ENCODE measurements at regions of chr10 and their contacts with region 1.

Region 1: DNA sequence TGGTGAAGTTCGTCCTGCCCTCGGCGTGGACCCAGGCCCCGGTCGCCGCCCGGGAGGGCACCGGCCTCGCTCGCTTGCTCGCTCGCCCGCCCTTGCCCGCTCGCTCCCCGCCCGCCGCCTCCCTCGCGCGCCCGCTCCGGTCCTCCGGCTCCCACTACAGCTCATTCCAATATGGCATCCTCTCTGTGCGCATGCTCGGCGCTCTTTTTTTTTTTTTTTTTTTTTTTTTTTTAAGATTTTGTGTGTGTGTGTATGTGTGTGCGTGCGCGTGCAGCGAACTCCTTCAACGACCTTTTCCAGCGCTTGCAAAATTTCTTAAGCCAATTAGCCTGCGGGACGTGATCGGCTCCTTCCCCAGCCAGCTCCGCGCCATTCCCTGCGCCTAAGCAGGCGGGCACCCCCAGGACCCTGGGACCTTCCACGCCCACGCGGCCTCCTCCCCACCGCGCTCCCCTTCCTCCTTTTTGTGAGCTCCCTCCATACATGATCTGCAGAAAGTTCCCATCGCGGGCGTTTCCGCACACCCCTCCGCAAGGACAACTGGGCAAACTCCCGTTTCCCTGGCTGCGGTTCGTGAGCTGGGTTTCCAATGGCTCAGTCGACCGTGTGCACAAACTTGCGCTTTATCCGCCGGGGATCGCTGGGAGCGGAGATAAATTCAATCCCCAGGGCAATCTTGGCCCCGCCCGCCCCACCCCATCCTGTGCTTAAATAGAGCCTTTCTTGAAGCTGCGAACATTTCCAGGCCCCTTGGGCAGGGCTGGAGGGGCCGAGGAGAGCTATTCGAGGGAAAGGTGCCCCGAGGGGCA is at the start of gene SFMBT2:
- DNase-seq: peak; percentile 52
- ATAC-seq: peak; percentile 59
- H3K4me3 Mint-ChIP-seq: peak within 1 kb of the TSS; percentile 95
- H3K27ac Mint-ChIP-seq: peak within 1 kb of the TSS; percentile 71
- H3K4me1 Mint-ChIP-seq: peaks cover 36% of the 10 kb centered on the region
- H3K27me3 Mint-ChIP-seq: peaks cover 5% of the 10 kb centered on the region
- CTCF ChIP-seq: no peak
- total RNA-seq, gene SFMBT2: 18.7 and 19.2 TPM in 2 replicates

Region 2: GRCh38 chr10:6416892-6417512 is 994.1 kb before region 1 on chr10:
- CTCF ChIA-PET with region 1: no interaction called
- POLR2A ChIA-PET with region 1: no interaction called
- intact Hi-C with region 1: loop called (anchors 2 kb)
- DNase-seq: no peak
- ATAC-seq: peak; percentile 58
- H3K4me3 Mint-ChIP-seq: no peak overlapping the region
- H3K27ac Mint-ChIP-seq: no peak overlapping the region
- H3K4me1 Mint-ChIP-seq: no peaks in the 10 kb centered on the region
- H3K27me3 Mint-ChIP-seq: peaks cover 4% of the 10 kb centered on the region
- CTCF ChIP-seq: peak; percentile 25

Region 3: DNA sequence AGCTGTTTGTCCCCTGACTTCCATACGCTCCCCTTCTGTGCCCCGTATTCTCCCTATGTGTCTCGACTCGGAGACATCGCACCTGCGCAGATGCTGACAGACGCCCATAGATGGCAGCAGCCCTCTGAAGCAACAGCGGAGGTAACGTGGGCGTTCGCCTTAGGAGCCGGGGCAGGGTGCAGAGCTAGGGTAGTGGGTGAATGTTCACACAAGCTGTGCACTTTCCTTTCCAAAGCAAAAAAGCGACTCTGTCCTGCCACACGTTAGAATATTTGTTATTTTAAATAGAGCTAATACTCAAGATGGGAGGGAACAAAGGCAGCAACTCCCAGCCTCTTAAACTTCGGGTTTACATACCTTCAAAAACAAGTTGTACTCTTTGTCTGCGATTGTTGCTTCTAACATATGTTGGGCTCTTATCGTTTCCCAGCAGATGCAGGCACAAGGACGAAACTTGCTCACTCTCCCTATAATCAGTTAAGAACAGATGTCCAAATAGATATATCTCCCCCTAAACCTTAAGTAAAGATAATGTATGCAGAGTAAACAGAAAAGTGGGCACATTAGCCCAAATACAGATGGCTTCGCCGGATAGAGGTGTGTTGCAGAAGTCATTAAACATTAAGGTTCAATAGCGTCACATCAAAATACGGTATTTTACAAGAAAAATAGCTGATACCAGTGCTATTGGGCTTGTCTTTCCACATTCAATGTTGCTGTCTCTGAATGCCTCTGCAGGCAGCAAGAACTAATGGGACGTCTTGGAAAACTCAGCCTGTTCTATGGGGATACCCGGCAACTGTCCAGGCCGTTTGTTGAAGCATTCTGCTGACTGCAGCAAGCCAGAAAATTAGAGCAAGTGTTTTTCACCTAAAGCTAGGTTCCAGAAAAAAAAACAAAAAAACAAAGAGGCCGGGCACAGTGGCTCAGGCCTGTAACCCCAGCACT is 490.7 kb before region 1 on chr10:
- CTCF ChIA-PET with region 1: interaction called, 15 read pairs
- POLR2A ChIA-PET with region 1: interaction called, 3 read pairs
- intact Hi-C with region 1: loop called (anchors 1 kb)
- DNase-seq: peak; percentile 49
- ATAC-seq: peak; percentile 93
- H3K4me3 Mint-ChIP-seq: no peak overlapping the region
- H3K27ac Mint-ChIP-seq: no peak overlapping the region
- H3K4me1 Mint-ChIP-seq: peaks cover 26% of the 10 kb centered on the region
- H3K27me3 Mint-ChIP-seq: no peaks in the 10 kb centered on the region
- CTCF ChIP-seq: peak; percentile 33

Region 4: DNA sequence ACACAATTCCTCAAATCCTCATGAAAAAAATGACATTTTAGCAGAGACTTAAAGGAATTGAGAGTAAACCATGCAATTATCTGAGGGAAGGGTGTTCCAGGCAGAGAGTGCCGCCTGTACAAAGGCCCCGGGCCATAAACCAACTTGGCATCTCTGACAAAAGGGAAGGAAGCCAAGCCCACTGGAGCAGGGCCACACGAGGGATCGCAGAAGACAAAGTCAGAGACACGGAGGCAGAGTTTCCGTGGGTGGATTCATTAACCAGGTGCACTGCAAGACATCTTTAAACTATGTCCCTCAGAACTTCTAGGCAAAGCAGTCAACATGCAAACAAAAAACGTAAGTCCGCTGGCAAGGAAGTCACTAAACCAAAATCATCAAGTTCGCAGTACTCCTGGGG is 92.2 kb before region 1 on chr10:
- CTCF ChIA-PET with region 1: no interaction called
- POLR2A ChIA-PET with region 1: no interaction called
- intact Hi-C with region 1: no loop called
- DNase-seq: no peak
- ATAC-seq: peak; percentile 57
- H3K4me3 Mint-ChIP-seq: peak overlapping the region; percentile 36
- H3K27ac Mint-ChIP-seq: peak overlapping the region; percentile 16
- H3K4me1 Mint-ChIP-seq: peaks cover 53% of the 10 kb centered on the region
- H3K27me3 Mint-ChIP-seq: no peaks in the 10 kb centered on the region
- CTCF ChIP-seq: no peak

Region 5: DNA sequence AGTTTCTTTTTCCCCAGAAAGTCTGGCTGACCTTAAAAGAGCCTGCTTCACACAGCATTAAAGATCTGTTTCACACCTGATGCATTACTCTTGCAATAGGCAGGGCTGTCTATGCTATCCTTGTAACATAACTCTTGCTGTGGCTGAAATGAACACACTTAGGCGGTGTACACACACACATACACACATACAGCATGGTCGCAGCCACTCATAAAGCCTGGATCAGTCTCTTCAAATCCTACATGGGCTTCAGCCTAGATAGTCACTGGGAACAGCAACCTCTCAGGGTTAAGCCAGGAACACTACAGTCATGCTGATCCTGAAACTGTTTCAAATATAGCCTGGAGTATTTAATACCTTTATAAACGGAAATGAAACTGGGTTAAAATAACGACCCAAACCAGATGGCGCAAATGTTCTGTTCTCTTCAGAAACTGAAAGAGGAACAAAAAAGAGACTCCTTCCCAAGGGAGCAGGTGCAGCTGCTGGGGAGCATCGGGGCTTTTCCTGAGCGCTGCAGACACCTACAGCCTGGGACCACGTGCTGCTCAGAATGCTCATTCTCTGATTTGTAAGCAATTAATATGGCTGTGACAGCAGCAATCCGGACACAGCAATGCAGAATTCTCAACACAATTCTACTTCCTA is 60.8 kb after region 1 on chr10:
- CTCF ChIA-PET with region 1: interaction called, 3 read pairs
- POLR2A ChIA-PET with region 1: interaction called, 4 read pairs
- intact Hi-C with region 1: loop called (anchors 1 kb)
- DNase-seq: peak; percentile 59
- ATAC-seq: peak; percentile 89
- H3K4me3 Mint-ChIP-seq: peak overlapping the region; percentile 73
- H3K27ac Mint-ChIP-seq: peak overlapping the region; percentile 90
- H3K4me1 Mint-ChIP-seq: peaks cover 78% of the 10 kb centered on the region
- H3K27me3 Mint-ChIP-seq: no peaks in the 10 kb centered on the region
- CTCF ChIP-seq: no peak

Region 6: GRCh38 chr10:7622969-7623368 is 211.9 kb after region 1 on chr10:
- CTCF ChIA-PET with region 1: interaction called, 3 read pairs
- POLR2A ChIA-PET with region 1: no interaction called
- intact Hi-C with region 1: loop called (anchors 10 kb)
- DNase-seq: no peak
- ATAC-seq: no peak
- H3K4me3 Mint-ChIP-seq: no peak overlapping the region
- H3K27ac Mint-ChIP-seq: no peak overlapping the region
- H3K4me1 Mint-ChIP-seq: peaks cover 5% of the 10 kb centered on the region
- H3K27me3 Mint-ChIP-seq: peaks cover 2% of the 10 kb centered on the region
- CTCF ChIP-seq: no peak

Region 7: GRCh38 chr10:7818295-7819122 is 407.4 kb after region 1 on chr10 and contains the start of gene TAF3:
- CTCF ChIA-PET with region 1: no interaction called
- POLR2A ChIA-PET with region 1: no interaction called
- intact Hi-C with region 1: loop called (anchors 1 kb)
- DNase-seq: peak; percentile 90
- ATAC-seq: peak; percentile 93
- H3K4me3 Mint-ChIP-seq: peak within 1 kb of the TSS; percentile 100
- H3K27ac Mint-ChIP-seq: peak within 1 kb of the TSS; percentile 87
- H3K4me1 Mint-ChIP-seq: peaks cover 27% of the 10 kb centered on the region
- H3K27me3 Mint-ChIP-seq: peaks cover 4% of the 10 kb centered on the region
- CTCF ChIP-seq: no peak
- total RNA-seq, gene TAF3: 12.4 and 12.6 TPM in 2 replicates

Measured in activated B cell treated with CpG ODN at 0.5 μM for 24 hours (primary cell).